Prostate gland (tissue), 2 donors: ENCODE measurements at regions of chr19 and their contacts with region 1.

Region 1: DNA sequence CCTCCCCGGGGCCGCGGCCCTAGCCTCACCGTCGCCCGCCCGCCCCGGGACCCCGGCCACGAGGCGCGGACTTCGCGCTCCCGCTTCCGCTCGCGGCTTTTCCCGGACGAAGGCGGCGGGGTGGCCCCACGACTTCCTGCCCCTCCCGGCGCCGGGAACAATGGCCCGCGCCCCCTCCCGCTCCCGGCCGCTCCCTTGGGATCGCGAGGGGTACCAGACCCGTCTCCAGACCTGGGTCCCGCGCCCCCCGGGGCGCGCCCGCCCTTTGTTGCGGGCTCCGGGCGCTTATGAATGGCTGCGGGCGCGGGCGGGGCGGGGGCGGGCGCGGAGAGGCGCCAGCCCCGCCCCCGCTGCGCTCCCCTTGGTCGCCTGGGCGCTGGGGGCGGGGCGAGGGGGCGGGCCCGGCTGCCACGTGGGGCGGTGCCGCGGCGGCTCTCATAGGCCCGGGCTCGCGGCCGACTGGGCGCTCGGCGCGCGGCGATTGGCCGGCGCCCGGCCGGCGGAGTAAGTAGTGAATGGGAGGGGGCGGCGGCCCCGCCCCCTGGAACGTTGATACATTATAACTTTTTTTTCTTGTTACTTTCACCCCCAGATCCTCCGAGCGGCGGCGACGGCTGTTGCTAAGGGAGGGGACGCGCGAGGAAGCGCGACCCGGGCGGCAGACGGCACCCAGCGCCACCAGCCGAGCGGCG is 1.1 kb downstream of the MIDN start:
- DNase-seq: peak; percentile 96
- H3K4me3 ChIP-seq: peak overlapping the region; percentile 87 to 95
- H3K27ac ChIP-seq: peak overlapping the region; percentile 100
- H3K4me1 ChIP-seq: peaks cover 42% of the 10 kb centered on the region
- H3K27me3 ChIP-seq: no peaks in the 10 kb centered on the region
- CTCF ChIP-seq: peak in 1 of 4 experiments; percentile 26
- POLR2A ChIP-seq: peak; percentile 92

Region 2: GRCh38 chr19:1039646-1040475 is 209.6 kb before region 1 on chr19 and contains the start of gene ABCA7:
- intact Hi-C with region 1: loop called (anchors 10 kb)
- DNase-seq: peak; percentile 98
- H3K4me3 ChIP-seq: peak within 1 kb of the TSS; percentile 28 to 43
- H3K27ac ChIP-seq: peak within 1 kb of the TSS in 1 of 2 donors; percentile 6
- H3K4me1 ChIP-seq: peaks cover 3% of the 10 kb centered on the region
- H3K27me3 ChIP-seq: no peaks in the 10 kb centered on the region
- CTCF ChIP-seq: peak in 2 of 4 experiments; percentile 34 to 41
- POLR2A ChIP-seq: peak; percentile 76
- total RNA-seq, gene ABCA7: 16.2 to 25.1 TPM